Endothelial cell of umbilical vein (primary cell): ENCODE measurements at regions of chr2 and their contacts with region 1.

Region 1: DNA sequence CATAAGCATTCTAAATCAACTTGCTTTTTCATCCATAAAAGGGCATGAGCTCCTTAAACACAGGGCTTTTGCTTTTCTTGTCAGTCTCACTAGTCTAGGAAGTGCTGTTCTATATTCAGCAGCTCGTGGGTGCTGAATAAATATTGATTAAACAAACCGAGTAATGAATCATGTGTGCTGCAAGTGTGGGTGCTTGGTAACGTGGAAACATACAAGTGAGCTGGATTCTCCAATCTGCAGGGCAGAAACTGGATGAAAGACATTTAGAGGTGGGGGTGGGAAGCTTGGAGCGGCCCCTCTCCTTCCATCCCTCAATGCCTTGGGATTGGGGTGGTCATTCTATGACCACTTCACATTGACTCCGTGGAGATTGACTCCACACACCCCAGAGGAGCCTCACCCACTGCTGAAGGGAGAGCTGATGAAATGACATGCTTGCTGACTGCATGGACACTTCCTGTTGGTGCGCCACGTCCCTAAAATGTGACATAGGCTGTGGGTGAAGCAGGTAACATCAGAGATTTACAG is 114.6 kb downstream of the DOCK10 start:
- DNase-seq: peak; percentile 77
- H3K4me3 ChIP-seq: no peak overlapping the region
- H3K27ac ChIP-seq: peak overlapping the region; percentile 87
- H3K4me1 ChIP-seq: peaks cover 34% of the 10 kb centered on the region
- H3K27me3 ChIP-seq: no peaks in the 10 kb centered on the region
- CTCF ChIP-seq: no peak
- POLR2A ChIP-seq: no peak

Region 2: GRCh38 chr2:224816816-224817215 is 110.9 kb before region 1 on chr2:
- CTCF ChIA-PET with region 1: interaction called, 4 read pairs
- POLR2A ChIA-PET with region 1: no interaction called
- dilution Hi-C with region 1: no loop called
- intact Hi-C with region 1: loop called (anchors 5 kb)
- DNase-seq: peak; percentile 62
- H3K4me3 ChIP-seq: no peak overlapping the region
- H3K27ac ChIP-seq: peak overlapping the region; percentile 64
- H3K4me1 ChIP-seq: peaks cover 34% of the 10 kb centered on the region
- H3K27me3 ChIP-seq: no peaks in the 10 kb centered on the region
- CTCF ChIP-seq: no peak
- POLR2A ChIP-seq: no peak

Region 3: GRCh38 chr2:224938651-224939182 is 11.0 kb after region 1 on chr2:
- CTCF ChIA-PET with region 1: interaction called, 13 read pairs
- POLR2A ChIA-PET with region 1: no interaction called
- dilution Hi-C with region 1: no loop called
- intact Hi-C with region 1: loop called (anchors 1 kb)
- DNase-seq: peak; percentile 94
- H3K4me3 ChIP-seq: peak overlapping the region in 1 of 3 experiments; percentile 4
- H3K27ac ChIP-seq: peak overlapping the region; percentile 47
- H3K4me1 ChIP-seq: peaks cover 44% of the 10 kb centered on the region
- H3K27me3 ChIP-seq: no peaks in the 10 kb centered on the region
- CTCF ChIP-seq: no peak
- POLR2A ChIP-seq: no peak

Region 4: DNA sequence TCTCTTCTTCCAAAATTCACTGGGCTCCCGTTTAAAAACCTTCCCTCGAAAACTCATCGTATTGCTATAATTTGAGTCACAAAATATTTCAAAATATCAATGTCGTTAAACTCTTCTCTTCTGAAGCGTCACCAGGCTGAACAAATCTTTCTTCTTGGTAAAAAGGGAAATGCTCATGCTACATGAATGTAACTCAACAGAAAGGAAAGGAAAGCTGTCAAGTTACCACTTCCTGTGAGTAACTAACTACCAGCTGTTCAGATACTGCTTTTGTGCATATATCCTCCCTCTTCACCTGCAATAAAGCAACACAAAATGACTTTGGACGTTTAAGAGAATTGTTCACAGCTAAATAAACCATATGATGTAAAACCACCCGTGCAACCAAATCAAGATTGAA is 19.2 kb after region 1 on chr2:
- CTCF ChIA-PET with region 1: interaction called, 5 read pairs
- POLR2A ChIA-PET with region 1: interaction called, 4 read pairs
- dilution Hi-C with region 1: no loop called
- intact Hi-C with region 1: loop called (anchors 1 kb)
- DNase-seq: peak; percentile 84
- H3K4me3 ChIP-seq: peak overlapping the region; percentile 13 to 95 (median 93)
- H3K27ac ChIP-seq: peak overlapping the region; percentile 99
- H3K4me1 ChIP-seq: peaks cover 61% of the 10 kb centered on the region
- H3K27me3 ChIP-seq: no peaks in the 10 kb centered on the region
- CTCF ChIP-seq: no peak
- POLR2A ChIP-seq: peak; percentile 71

Region 5: GRCh38 chr2:225573603-225574002 is 645.9 kb after region 1 on chr2:
- CTCF ChIA-PET with region 1: no interaction called
- POLR2A ChIA-PET with region 1: no interaction called
- dilution Hi-C with region 1: no loop called
- intact Hi-C with region 1: no loop called
- DNase-seq: no peak
- H3K4me3 ChIP-seq: no peak overlapping the region
- H3K27ac ChIP-seq: no peak overlapping the region
- H3K4me1 ChIP-seq: no peaks in the 10 kb centered on the region
- H3K27me3 ChIP-seq: no peaks in the 10 kb centered on the region
- CTCF ChIP-seq: no peak
- POLR2A ChIP-seq: no peak